Esophagus squamous epithelium (tissue), 5 donors: ENCODE measurements at regions of chr1 and their contacts with region 1.

Region 1: GRCh38 chr1:112715264-112716053 is at the start of gene PPM1J:
- DNase-seq: peak; percentile 72
- H3K4me3 ChIP-seq: peak within 1 kb of the TSS; percentile 59 to 81 (median 63)
- H3K27ac ChIP-seq: peak within 1 kb of the TSS; percentile 69 to 85 (median 78)
- H3K4me1 ChIP-seq: peaks cover 4 to 42% (median 18%) of the 10 kb centered on the region in 3 donors
- H3K27me3 ChIP-seq: peaks cover 0 to 21% (median 0%) of the 10 kb centered on the region in 4 donors
- CTCF ChIP-seq: peak in 1 of 6 experiments; percentile 7
- POLR2A ChIP-seq: peak in 1 of 4 donors; percentile 41
- total RNA-seq, gene PPM1J: 2.2 to 4.8 (median 2.9) TPM

Region 2: GRCh38 chr1:112544011-112544688 is 171.3 kb before region 1 on chr1:
- intact Hi-C with region 1: no loop called
- DNase-seq: no peak
- H3K4me3 ChIP-seq: no peak overlapping the region
- H3K27ac ChIP-seq: peak overlapping the region in 3 of 4 donors; percentile 61 to 77 (median 62)
- H3K4me1 ChIP-seq: peaks cover 0 to 19% (median 4%) of the 10 kb centered on the region in 3 donors
- H3K27me3 ChIP-seq: no peaks in the 10 kb centered on the region
- CTCF ChIP-seq: no peak
- POLR2A ChIP-seq: no peak

Region 3: GRCh38 chr1:112809253-112809684 is 93.8 kb after region 1 on chr1:
- intact Hi-C with region 1: loop called (anchors 5 kb)
- DNase-seq: no peak
- H3K4me3 ChIP-seq: no peak overlapping the region
- H3K27ac ChIP-seq: no peak overlapping the region
- H3K4me1 ChIP-seq: peaks cover 0 to 6% (median 0%) of the 10 kb centered on the region in 3 donors
- H3K27me3 ChIP-seq: no peaks in the 10 kb centered on the region
- CTCF ChIP-seq: peak; percentile 49 to 87 (median 72)
- POLR2A ChIP-seq: no peak

Region 4: GRCh38 chr1:112849425-112850033 is 134.1 kb after region 1 on chr1:
- intact Hi-C with region 1: no loop called
- DNase-seq: no peak
- H3K4me3 ChIP-seq: peak overlapping the region; percentile 24 to 61 (median 40)
- H3K27ac ChIP-seq: no peak overlapping the region
- H3K4me1 ChIP-seq: peaks cover 8 to 17% (median 10%) of the 10 kb centered on the region in 3 donors
- H3K27me3 ChIP-seq: peaks cover 0 to 53% (median 0%) of the 10 kb centered on the region in 4 donors
- CTCF ChIP-seq: no peak
- POLR2A ChIP-seq: no peak